Activated T-helper 1 cell treated with anti-CD3 and anti-CD28 coated beads, Interleukin-12 subunit alpha, Interleukin-12 subunit beta, Interleukin-2, Interleukin-4 antibody, amounts not matched to agents 30 ng/mL and 10 ng/mL and 1 ng/mL, durations not matched to agents 14 hours and 24 hours and 36 hours (primary cell): ENCODE measurements at regions of chr9 and their contacts with region 1.

Region 1: GRCh38 chr9:127916665-127917613 is at the start of gene ST6GALNAC4:
- DNase-seq: peak; percentile 91
- H3K4me3 Mint-ChIP-seq: peak within 1 kb of the TSS; percentile 84
- H3K27ac Mint-ChIP-seq: peak within 1 kb of the TSS; percentile 89
- H3K4me1 Mint-ChIP-seq: peaks cover 57% of the 10 kb centered on the region
- H3K27me3 Mint-ChIP-seq: peaks cover 3% of the 10 kb centered on the region
- total RNA-seq, gene ST6GALNAC4: 30.8 and 31.6 TPM in 2 replicates

Region 2: DNA sequence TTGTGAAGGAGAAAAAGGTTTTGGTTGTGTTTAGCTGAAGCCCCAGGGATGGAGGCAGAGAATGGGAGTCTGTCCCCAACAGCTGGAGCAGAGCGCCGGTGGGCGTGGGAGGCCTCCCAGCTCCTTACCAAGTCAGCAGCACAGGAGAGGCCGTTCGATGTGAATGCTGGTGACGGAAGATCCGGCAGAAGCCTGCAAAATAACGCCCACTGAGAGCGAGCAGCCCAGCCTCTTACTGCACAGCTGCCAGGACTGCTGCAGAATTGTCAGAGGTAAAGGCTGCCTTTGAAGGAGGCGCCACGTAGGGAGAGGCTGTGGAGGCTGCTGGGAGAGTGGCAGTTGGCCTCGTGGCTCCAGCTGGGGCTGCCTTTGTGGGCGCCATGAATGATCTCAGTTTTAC is 820.7 kb before region 1 on chr9:
- intact Hi-C with region 1: no loop called
- DNase-seq: no peak
- H3K4me3 Mint-ChIP-seq: no peak overlapping the region
- H3K27ac Mint-ChIP-seq: no peak overlapping the region
- H3K4me1 Mint-ChIP-seq: no peaks in the 10 kb centered on the region
- H3K27me3 Mint-ChIP-seq: peaks cover 2% of the 10 kb centered on the region

Region 3: DNA sequence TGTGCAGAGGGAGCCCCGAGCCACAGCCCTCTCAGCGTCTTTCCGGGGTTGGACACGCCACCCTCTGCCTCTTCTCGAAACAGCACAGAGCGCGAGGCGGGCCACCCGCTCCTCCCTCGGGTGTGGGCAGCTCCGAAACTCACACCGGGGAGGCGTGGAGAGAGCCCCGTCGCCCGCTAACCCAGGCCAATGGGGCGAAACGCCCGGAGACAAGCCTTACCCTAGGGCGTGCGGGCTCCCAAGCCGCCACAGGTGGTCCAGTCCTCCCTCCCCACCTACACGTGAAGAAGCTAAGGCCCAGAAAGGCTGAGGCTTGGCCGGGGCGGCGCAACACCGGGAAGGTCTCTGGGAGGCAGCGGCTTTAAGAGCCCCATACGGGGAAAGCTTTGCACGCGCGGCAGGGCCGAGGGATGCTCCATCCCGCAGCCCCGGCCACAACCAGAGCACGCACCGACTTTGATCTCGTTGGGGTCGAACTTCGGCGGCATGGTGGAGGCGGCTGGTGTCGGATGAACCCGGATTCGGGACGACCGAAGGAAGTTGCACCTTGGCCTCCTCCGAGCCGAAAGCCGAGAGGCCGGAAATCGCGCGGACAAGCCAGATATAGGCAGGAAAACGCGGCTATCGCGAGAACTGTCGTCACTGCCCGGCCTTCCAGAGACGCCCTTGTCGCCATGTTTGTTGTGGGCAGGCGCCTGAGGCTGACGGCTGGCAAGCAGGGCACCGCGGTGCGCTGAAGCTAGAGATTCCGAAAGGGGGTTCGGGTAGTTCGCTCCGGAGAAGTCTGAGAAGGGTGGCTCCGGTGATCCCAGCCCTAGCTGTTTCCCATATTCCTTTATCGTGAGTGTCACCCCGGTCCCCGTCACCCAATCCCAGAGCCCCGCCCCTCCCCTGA is 465.9 kb before region 1 on chr9 and contains the starts of genes LRSAM1 and RPL12:
- intact Hi-C with region 1: loop called (anchors 5 kb)
- DNase-seq: peak; percentile 96
- H3K4me3 Mint-ChIP-seq: peak within 1 kb of the TSS; percentile 92
- H3K27ac Mint-ChIP-seq: peak within 1 kb of the TSS; percentile 98
- H3K4me1 Mint-ChIP-seq: peaks cover 55% of the 10 kb centered on the region
- H3K27me3 Mint-ChIP-seq: no peaks in the 10 kb centered on the region
- total RNA-seq, gene LRSAM1: 23.8 and 25.8 TPM in 2 replicates
- total RNA-seq, gene RPL12: 1,157 and 1,162 TPM in 2 replicates

Region 4: DNA sequence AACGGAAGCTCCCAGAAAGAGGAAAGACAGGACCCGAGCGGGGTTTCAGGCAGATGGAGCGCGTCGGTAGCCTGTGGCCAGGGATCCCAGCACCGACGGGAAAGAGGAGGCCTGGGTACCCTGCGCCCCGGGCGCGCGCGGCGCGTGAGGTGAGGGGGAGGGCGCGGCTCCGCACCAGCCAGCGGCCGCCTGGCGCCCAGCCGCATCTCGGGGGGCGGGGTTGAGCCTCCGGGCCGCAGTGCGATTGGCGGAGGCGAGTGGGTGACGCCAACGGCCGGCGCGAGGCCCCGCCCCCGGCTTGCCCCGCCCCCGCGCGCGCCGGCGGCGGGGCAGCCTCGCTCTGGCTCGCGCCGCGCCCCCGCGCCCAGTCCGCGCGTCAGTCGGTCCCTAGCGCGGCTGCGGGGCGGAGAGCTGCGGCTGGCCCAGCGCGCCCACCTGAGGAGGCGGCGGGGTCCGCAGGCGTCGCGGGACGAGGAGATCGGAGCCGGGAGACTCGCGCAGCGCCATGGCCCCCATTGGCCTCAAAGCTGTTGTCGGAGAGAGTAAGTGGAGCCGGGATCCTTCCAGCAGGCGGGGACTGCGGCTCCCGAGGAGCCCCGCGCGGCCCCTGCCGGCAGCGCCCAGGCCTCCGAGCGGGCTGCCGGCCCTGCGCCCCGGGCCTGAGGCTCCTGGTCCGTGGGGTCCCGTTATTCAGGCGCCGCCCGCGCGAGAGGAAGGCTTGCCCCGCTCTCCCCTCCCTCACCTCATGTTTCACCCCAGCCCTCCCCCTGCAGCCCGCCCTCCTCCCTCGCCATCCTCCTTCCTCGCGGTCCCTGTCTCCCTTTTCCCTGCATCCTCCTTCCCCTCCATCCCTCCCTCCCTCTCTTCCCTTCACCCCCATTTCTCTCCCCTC is 304.8 kb before region 1 on chr9 and contains the start of gene STXBP1:
- intact Hi-C with region 1: loop called (anchors 2 kb)
- DNase-seq: peak; percentile 89
- H3K4me3 Mint-ChIP-seq: peak within 1 kb of the TSS; percentile 95
- H3K27ac Mint-ChIP-seq: peak within 1 kb of the TSS; percentile 91
- H3K4me1 Mint-ChIP-seq: peaks cover 40% of the 10 kb centered on the region
- H3K27me3 Mint-ChIP-seq: peaks cover 45% of the 10 kb centered on the region
- total RNA-seq, gene STXBP1: 26.1 and 32.9 TPM in 2 replicates

Region 5: DNA sequence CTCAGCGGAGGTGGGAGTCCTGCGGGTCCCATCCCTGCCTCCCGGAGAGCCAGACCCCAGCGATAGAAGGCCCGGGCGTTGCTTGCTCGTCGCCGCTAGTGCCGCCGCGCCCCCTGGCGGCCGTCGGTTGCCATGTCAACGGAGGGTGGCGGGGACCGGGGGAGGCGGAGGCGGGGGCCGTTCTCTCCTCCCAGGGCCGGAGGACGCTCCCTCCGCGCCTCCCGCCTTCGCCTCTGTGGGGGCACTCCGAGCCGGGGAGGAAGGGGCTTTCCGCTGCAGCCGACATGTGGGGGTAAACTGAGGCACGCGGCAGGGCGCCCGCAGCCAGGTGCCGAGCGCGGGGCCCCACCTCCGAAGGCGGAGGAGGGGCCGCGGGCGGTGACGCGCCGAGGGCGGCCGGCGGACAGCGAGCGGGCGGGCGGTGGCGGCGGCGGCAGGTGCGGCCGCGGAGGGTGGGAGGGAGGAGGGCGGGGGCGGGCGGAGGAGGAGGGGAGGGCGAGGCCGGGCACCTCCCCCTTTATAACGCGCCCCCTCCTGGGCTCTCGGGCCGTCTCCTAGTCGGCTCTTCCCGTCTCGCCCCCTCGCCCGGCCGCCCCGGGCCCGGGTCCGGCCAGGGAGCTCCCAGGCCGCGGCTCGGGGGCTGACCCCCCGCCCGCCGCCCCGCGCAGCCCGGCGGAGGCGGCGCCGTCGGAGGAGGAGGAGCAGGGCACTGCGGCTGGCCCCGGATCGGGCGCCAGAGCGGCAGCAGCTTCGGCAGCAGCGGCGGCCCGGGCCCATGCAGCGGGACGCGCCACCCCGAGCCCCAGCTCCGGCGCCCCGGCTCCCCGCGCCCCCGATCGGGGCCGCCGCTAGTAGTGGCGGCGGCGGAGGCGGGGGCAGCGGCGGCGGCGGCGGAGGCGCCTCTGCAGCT is 131.7 kb before region 1 on chr9:
- intact Hi-C with region 1: loop called (anchors 1 kb)
- DNase-seq: peak; percentile 87
- H3K4me3 Mint-ChIP-seq: peak overlapping the region; percentile 96
- H3K27ac Mint-ChIP-seq: peak overlapping the region; percentile 99
- H3K4me1 Mint-ChIP-seq: peaks cover 67% of the 10 kb centered on the region
- H3K27me3 Mint-ChIP-seq: no peaks in the 10 kb centered on the region

Region 6: DNA sequence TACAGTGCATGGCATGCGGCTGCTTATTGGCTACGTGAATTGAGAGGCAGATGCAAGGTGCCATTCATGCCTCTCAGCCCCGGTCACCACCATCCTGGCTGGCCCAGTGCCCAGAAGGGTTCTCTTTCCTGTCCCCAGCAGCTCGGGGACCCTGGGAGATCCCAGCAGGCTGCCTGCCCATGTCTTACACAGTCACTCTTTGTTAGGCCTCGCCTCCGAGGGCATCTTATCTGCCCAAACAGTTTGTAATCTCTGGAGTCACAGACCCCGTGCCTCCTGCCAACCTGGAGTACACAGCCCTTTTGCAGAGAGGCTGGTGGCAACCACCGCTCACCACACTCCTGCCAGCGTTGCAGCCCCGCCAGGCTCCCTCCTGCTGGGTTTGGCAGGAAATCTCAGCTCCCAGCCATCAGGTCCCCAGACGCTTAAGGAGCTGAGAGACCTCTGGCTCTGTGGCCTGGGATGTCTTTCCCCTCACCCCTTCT is 32.5 kb before region 1 on chr9:
- intact Hi-C with region 1: loop called (anchors 5 kb)
- DNase-seq: no peak
- H3K4me3 Mint-ChIP-seq: no peak overlapping the region
- H3K27ac Mint-ChIP-seq: no peak overlapping the region
- H3K4me1 Mint-ChIP-seq: peaks cover 15% of the 10 kb centered on the region
- H3K27me3 Mint-ChIP-seq: no peaks in the 10 kb centered on the region